ENCODE measurements at regions of chr15 and their contacts with region 1.

Region 1: GRCh38 chr15:55218056-55218455 is 21.3 kb upstream of the RSL24D1 start:
- DNase-seq: peak; percentile 44
- H3K4me3 ChIP-seq: no peak overlapping the region
- H3K27ac ChIP-seq: peak overlapping the region; percentile 8 to 95; a peak in 3 of 4 replicates
- H3K4me1 ChIP-seq: peaks cover 0 to 6% of the 10 kb centered on the region in 2 experiments; a peak in 2 of 4 replicates
- H3K27me3 ChIP-seq: no peaks in the 10 kb centered on the region
- CTCF ChIP-seq: no peak
- EP300 ChIP-seq: peak in 1 of 2 experiments; percentile 68; a peak in 2 of 4 replicates
- RAD21 ChIP-seq: no peak

Region 2: GRCh38 chr15:55290528-55291057 is 72.5 kb after region 1 on chr15:
- CTCF ChIA-PET with region 1: interaction called, 43 read pairs
- POLR2A ChIA-PET with region 1: interaction called, 3 read pairs
- DNase-seq: peak; percentile 91
- H3K4me3 ChIP-seq: peak overlapping the region; percentile 74 to 87
- H3K27ac ChIP-seq: peak overlapping the region; percentile 71 to 88
- H3K4me1 ChIP-seq: peaks cover 0 to 8% of the 10 kb centered on the region in 2 experiments; a peak in 1 of 4 replicates
- H3K27me3 ChIP-seq: no peaks in the 10 kb centered on the region
- CTCF ChIP-seq: peak; percentile 95
- EP300 ChIP-seq: no peak
- RAD21 ChIP-seq: peak; percentile 94

Region 3: GRCh38 chr15:55494931-55495330 is 276.9 kb after region 1 on chr15:
- CTCF ChIA-PET with region 1: no interaction called
- POLR2A ChIA-PET with region 1: no interaction called
- DNase-seq: no peak
- H3K4me3 ChIP-seq: no peak overlapping the region
- H3K27ac ChIP-seq: no peak overlapping the region
- H3K4me1 ChIP-seq: peaks cover 0 to 2% of the 10 kb centered on the region in 2 experiments; a peak in 2 of 4 replicates
- H3K27me3 ChIP-seq: no peaks in the 10 kb centered on the region
- CTCF ChIP-seq: no peak
- EP300 ChIP-seq: no peak
- RAD21 ChIP-seq: no peak

Measured in SK-N-SH (cell line).